CD14-positive monocyte (primary cell): ENCODE measurements at regions of chr16 and their contacts with region 1.

Region 1: DNA sequence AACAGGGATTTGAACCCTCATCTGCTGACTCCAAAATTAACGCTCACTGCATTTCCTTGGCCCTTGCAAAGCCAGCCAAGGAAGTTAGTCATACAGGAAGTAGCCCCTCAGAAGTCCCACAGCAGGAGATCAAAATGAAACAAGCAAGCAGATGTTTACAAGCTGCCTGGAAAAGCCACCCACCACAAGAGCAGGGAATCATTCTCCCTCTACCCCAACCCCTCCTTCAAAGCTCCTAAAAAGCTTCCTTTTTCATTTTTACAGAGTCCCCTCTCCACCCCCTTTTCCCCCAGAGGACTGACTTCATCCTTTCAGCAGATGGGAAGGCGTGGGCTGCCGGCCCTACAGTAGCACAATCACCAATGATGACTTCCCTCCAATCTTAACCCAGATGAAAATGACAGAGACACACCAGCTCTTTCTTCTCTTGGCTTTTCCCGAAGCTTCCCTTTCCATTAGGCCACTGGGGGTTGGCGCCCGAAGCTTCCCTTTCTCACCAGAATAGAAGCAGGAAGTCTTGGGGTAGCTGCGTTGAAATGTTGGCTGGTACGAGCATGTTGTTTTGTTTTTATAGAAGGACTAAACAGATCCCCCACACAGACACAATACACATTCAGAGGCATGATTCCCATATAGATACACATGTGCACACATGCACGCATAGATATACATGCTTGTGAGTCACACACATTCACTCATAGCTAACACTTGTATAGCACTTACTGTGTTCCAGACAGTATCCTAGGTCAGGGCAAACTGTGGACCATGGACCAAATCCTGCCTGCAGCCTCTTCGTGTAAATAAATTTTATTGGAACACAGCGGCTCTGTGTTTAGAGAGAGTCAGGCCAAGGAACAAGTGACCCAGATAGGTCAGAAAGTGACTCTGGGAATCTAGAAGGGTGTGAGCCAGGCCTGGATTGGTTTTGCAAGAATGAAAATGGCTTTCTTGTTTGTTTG is 17.4 kb downstream of the ITPRIPL2 start:
- DNase-seq: peak; percentile 29 to 59 (median 57)
- H3K4me3 ChIP-seq: peak overlapping the region in 1 of 3 experiments; percentile 60
- H3K4me3 Mint-ChIP-seq: peak overlapping the region; percentile 70 to 88
- H3K27ac ChIP-seq: peak overlapping the region; percentile 51 to 63
- H3K27ac Mint-ChIP-seq: peak overlapping the region; percentile 68 to 94 (median 85)
- H3K4me1 ChIP-seq: peaks cover 56 to 63% of the 10 kb centered on the region in 2 donors
- H3K4me1 Mint-ChIP-seq: peaks cover 59% of the 10 kb centered on the region
- H3K27me3 ChIP-seq: no peaks in the 10 kb centered on the region
- H3K27me3 Mint-ChIP-seq: no peaks in the 10 kb centered on the region
- CTCF ChIP-seq: no peak

Region 2: GRCh38 chr16:18969050-18969854 is 161.9 kb before region 1 on chr16:
- intact Hi-C with region 1: no loop called
- DNase-seq: peak; percentile 44 to 64 (median 64)
- H3K4me3 ChIP-seq: peak overlapping the region in 1 of 3 experiments; percentile 53
- H3K4me3 Mint-ChIP-seq: peak overlapping the region; percentile 25 to 54
- H3K27ac ChIP-seq: no peak overlapping the region
- H3K27ac Mint-ChIP-seq: no peak overlapping the region
- H3K4me1 ChIP-seq: peaks cover 0 to 5% of the 10 kb centered on the region in 2 donors
- H3K4me1 Mint-ChIP-seq: peaks cover 3% of the 10 kb centered on the region
- H3K27me3 ChIP-seq: no peaks in the 10 kb centered on the region
- H3K27me3 Mint-ChIP-seq: peaks cover 2 to 7% (median 5%) of the 10 kb centered on the region in 3 donors
- CTCF ChIP-seq: peak; percentile 97

Region 3: GRCh38 chr16:19094541-19095365 is 36.4 kb before region 1 on chr16:
- intact Hi-C with region 1: loop called in 1 of 2 experiments (anchors 5 kb)
- DNase-seq: peak; percentile 39 to 75 (median 69)
- H3K4me3 ChIP-seq: no peak overlapping the region
- H3K4me3 Mint-ChIP-seq: peak overlapping the region in 1 of 2 donors; percentile 36
- H3K27ac ChIP-seq: no peak overlapping the region
- H3K27ac Mint-ChIP-seq: peak overlapping the region in 2 of 7 donors; percentile 56 to 83
- H3K4me1 ChIP-seq: peaks cover 3 to 6% of the 10 kb centered on the region in 2 donors
- H3K4me1 Mint-ChIP-seq: peaks cover 18% of the 10 kb centered on the region
- H3K27me3 ChIP-seq: no peaks in the 10 kb centered on the region
- H3K27me3 Mint-ChIP-seq: peaks cover 4 to 17% (median 12%) of the 10 kb centered on the region in 3 donors
- CTCF ChIP-seq: no peak